Activated CD8-positive, alpha-beta T cell treated with anti-CD3 and anti-CD28 coated beads, Interleukin-2, amount 10 ng/mL, durations not matched to agents 7 days and 5 days (primary cell): ENCODE measurements at regions of chr3 and their contacts with region 1.

Region 1: DNA sequence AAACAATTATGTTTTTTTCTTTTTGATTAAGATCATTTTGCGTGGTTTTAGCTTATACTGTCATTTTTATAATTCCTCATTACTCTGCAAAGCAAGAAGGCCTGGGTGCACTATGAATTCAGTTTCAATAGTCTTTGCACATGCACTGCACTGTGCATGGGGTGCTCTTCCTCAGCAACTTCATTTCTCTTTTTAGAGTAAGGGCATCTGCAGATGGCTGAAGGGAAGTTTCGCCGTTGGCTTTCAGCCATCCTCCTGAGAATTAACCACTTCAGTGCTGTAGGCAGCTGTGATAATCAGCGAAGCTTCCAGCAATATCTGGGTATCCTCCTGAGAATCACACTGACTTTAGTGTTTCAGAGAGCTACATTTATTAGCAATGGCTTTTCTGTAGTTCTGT is 284.8 kb downstream of the GBE1 start:
- DNase-seq: no peak
- ATAC-seq: no peak
- H3K4me3 Mint-ChIP-seq: no peak overlapping the region
- H3K27ac Mint-ChIP-seq: no peak overlapping the region
- H3K4me1 Mint-ChIP-seq: no peaks in the 10 kb centered on the region
- H3K27me3 Mint-ChIP-seq: peaks cover 3% of the 10 kb centered on the region

Region 2: GRCh38 chr3:81490541-81491288 is 14.0 kb after region 1 on chr3:
- CTCF ChIA-PET with region 1: interaction called, 13 read pairs
- POLR2A ChIA-PET with region 1: no interaction called
- DNase-seq: peak; percentile 88
- ATAC-seq: peak; percentile 86
- H3K4me3 Mint-ChIP-seq: no peak overlapping the region
- H3K27ac Mint-ChIP-seq: no peak overlapping the region
- H3K4me1 Mint-ChIP-seq: no peaks in the 10 kb centered on the region
- H3K27me3 Mint-ChIP-seq: no peaks in the 10 kb centered on the region